WTC11 (cell line): ENCODE measurements at regions of chr11 and their contacts with region 1.

Region 1: GRCh38 chr11:925496-926321 is at the start of gene AP2A2:
- DNase-seq: peak; percentile 87
- ATAC-seq: peak; percentile 67
- H3K4me3 Mint-ChIP-seq: peak within 1 kb of the TSS; percentile 84
- H3K27ac Mint-ChIP-seq: peak within 1 kb of the TSS; percentile 82; the same call in 1 of the 2 replicates
- H3K4me1 Mint-ChIP-seq: peaks cover 14% of the 10 kb centered on the region
- H3K27me3 Mint-ChIP-seq: no peaks in the 10 kb centered on the region
- CTCF ChIP-seq: peak; percentile 64
- total RNA-seq, gene AP2A2: 47.1 to 52.3 TPM (median 51.0 TPM) in 3 replicates

Region 2: GRCh38 chr11:863023-863909 is 62.4 kb before region 1 on chr11:
- CTCF ChIA-PET with region 1: no interaction called
- POLR2A ChIA-PET with region 1: no interaction called
- DNase-seq: no peak
- ATAC-seq: peak; percentile 5
- H3K4me3 Mint-ChIP-seq: peak overlapping the region; percentile 41
- H3K27ac Mint-ChIP-seq: 0 out of 2 replicates have a peak overlapping the region, but pooled peaks have one; percentile 53
- H3K4me1 Mint-ChIP-seq: peaks cover 26% of the 10 kb centered on the region
- H3K27me3 Mint-ChIP-seq: peaks cover 3% of the 10 kb centered on the region; the same call in 1 of the 2 replicates
- CTCF ChIP-seq: no peak

Region 3: GRCh38 chr11:910589-911195 is 15.0 kb before region 1 on chr11 and contains the start of gene CHID1:
- CTCF ChIA-PET with region 1: interaction called, 25 read pairs
- POLR2A ChIA-PET with region 1: interaction called, 4 read pairs
- DNase-seq: peak; percentile 89
- ATAC-seq: peak; percentile 95
- H3K4me3 Mint-ChIP-seq: peak within 1 kb of the TSS; percentile 85
- H3K27ac Mint-ChIP-seq: peak within 1 kb of the TSS; percentile 81
- H3K4me1 Mint-ChIP-seq: peaks cover 12% of the 10 kb centered on the region
- H3K27me3 Mint-ChIP-seq: no peaks in the 10 kb centered on the region
- CTCF ChIP-seq: no peak
- total RNA-seq, gene CHID1: 92.8 to 99.6 TPM (median 94.2 TPM) in 3 replicates

Region 4: DNA sequence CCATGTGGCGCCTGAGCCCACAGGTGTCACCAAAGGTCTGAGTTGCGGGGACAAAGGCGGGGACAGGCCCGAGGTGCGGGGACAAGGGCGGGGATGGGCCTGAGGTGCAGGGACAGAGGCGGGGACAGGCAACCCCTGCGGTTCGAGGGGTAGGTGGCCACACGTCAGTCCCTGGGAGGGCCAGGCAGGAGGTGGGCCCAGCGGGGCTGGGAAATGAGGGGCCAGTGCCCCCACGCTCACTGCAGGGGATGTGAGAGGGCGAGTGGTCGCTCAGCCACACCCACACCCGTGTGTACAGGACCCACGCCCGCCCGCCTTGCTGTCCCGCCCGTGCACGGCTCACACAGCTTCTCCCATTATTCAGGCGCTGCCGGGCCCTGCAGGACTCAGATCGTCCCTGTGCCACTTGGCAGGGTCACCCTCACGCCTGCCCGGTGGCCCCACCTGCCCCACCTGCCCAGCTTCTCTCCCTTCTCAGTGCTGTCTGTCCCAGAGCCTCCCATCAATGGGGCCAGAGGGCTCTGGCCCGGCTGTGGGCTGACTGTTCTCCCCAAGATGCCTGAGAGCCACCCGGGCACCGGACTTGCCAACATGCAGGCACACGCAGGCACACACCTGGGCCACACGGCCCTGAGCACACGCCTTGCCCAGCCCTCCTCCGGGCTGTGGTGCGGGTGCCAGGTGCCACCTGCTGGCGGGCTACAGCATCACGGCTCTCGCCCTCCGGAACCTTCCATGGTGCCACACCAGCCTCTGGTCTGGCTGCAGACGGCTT is 125.1 kb after region 1 on chr11:
- CTCF ChIA-PET with region 1: interaction called, 10 read pairs
- POLR2A ChIA-PET with region 1: no interaction called
- DNase-seq: peak; percentile 85
- ATAC-seq: peak; percentile 95
- H3K4me3 Mint-ChIP-seq: no peak overlapping the region
- H3K27ac Mint-ChIP-seq: no peak overlapping the region
- H3K4me1 Mint-ChIP-seq: no peaks in the 10 kb centered on the region
- H3K27me3 Mint-ChIP-seq: peaks cover 3% of the 10 kb centered on the region; the same call in 1 of the 2 replicates
- CTCF ChIP-seq: peak; percentile 85